ENCODE measurements at regions of chr2 and their contacts with region 1.

Region 1: DNA sequence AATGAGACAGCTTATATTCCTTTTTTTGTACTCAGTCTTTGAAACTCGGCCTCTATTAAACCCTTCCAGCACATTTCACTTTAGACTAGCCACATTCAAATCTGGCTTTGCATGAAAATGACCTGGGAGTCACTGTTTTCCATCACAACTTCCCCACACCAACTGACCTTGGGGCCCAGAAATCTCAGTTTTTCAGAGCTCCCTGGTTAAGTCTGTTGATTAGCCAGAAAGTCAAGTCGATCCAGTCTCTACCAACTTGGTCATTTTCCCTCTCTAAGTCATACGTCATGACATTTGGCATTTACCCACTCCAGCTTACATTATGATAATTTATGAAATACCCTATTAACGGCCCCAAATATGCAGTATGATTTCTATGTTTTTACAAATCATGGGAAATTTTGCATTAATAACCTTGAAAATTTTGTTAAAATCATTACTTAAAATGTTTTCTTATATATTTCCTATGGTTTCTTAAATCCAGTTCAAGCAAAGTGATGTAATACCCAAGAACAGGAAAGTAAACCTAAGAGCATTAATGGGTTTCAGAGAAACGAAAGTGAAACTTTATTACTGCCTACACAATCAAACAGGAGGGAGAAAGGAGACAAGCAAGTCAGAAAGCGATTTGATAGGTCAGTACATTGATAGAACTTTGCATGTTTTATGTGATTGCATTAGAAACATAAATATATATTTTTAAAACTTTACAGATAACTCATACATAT is 77.1 kb downstream of the SPATS2L start:
- DNase-seq: no peak

Region 2: DNA sequence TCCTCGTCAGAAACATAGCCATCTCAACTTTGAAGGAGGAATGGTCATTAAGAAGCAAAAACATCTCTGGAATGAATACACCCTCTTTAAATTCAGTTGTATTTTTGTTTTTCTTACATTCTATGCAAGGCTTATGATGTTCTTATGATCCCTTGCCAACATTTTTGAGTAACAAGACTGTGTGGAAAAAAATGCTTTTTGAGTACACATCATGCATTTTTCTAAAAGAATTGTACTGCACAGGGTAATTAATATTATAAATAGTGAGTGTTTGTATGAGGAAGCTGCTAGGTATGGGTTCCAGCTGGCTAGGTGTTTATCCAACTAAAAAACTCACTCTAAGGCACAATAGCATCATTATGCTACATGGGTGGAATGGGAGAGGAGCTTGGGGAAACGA is 136.1 kb before region 1 on chr2:
- intact Hi-C with region 1: no loop called
- DNase-seq: no peak

Region 3: DNA sequence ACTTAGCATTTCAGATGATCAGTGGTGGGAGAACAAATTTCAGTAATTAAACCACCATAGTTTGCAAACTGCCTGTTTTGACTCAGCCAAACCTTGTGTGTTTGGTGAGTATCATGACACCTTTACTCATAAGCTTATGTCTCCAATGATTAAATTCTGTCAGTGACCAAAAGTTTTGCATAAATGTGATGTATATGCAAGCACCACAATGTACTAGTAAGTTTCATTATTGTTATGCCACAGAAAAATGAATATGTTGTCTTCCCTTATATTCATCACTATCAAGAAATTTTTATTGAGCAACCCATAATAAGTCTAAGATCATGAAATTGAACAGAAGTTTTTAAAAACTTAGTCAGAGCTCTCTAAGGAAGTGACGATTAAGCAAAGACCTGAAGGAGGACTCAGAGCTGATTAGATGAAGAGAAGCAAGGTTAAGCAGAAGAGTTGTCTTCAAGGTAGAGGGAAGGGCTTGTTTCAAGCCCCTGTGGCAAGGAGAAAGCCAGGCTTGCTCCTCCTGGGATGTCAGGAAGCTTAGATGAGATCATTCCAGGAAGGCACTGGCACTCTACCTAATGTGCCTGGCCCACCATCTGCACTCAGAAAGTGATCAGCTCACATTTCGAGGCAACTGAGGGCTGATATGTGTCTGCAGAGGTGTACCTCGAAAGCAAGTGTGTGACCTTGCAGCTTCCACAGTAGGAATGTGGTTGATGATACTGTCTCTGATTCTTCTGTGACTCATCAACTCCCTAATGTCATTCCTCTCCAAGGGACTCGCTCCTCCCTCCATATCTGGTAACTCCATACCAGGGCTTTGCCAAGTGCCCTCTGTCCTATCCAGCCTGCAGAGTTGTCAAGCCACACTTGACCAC is 71.6 kb after region 1 on chr2:
- intact Hi-C with region 1: loop called (anchors 5 kb)
- DNase-seq: no peak

Measured in posterior cingulate gyrus (tissue), 11 donors.